CD14-positive monocyte (primary cell): ENCODE measurements at regions of chr2 and their contacts with region 1.

Region 1: DNA sequence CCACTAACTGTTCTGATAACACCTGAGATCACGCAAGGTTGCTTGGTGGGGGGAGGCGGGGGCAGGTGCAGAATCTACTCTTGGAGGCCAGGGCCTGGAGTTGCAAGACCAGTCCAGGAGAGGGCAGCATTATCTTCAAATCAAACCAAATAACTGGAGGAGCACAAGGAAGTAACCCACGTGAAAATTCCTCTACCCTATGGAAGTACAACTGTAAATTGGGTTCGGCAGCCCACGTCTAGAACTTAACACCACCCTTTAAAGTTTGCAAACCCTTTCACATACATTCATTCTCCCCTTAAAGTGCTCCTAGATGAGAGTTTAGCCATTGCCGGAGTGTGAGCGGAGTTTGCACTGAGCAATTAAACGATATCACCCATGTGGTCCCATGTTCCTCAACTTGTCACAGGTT is 19.6 kb upstream of the CXCR1 start:
- DNase-seq: peak; percentile 61 to 77 (median 75)
- H3K4me3 ChIP-seq: no peak overlapping the region
- H3K4me3 Mint-ChIP-seq: peak overlapping the region in 1 of 2 donors; percentile 26
- H3K27ac ChIP-seq: no peak overlapping the region
- H3K27ac Mint-ChIP-seq: peak overlapping the region in 2 of 7 donors; percentile 5 to 50
- H3K4me1 ChIP-seq: peaks cover 6 to 10% of the 10 kb centered on the region in 2 donors
- H3K4me1 Mint-ChIP-seq: peaks cover 6% of the 10 kb centered on the region
- H3K27me3 ChIP-seq: no peaks in the 10 kb centered on the region
- H3K27me3 Mint-ChIP-seq: peaks cover 0 to 5% (median 3%) of the 10 kb centered on the region in 3 donors
- CTCF ChIP-seq: peak; percentile 89

Region 2: GRCh38 chr2:218230882-218231281 is 44.5 kb after region 1 on chr2:
- intact Hi-C with region 1: loop called in 1 of 2 experiments (anchors 5 kb)
- DNase-seq: peak; percentile 36 to 45 (median 38)
- H3K4me3 ChIP-seq: peak overlapping the region in 1 of 3 experiments; percentile 64
- H3K4me3 Mint-ChIP-seq: no peak overlapping the region
- H3K27ac ChIP-seq: peak overlapping the region; percentile 68 to 76
- H3K27ac Mint-ChIP-seq: peak overlapping the region; percentile 18 to 88 (median 85)
- H3K4me1 ChIP-seq: peaks cover 44 to 52% of the 10 kb centered on the region in 2 donors
- H3K4me1 Mint-ChIP-seq: peaks cover 47% of the 10 kb centered on the region
- H3K27me3 ChIP-seq: no peaks in the 10 kb centered on the region
- H3K27me3 Mint-ChIP-seq: no peaks in the 10 kb centered on the region
- CTCF ChIP-seq: peak; percentile 56

Region 3: DNA sequence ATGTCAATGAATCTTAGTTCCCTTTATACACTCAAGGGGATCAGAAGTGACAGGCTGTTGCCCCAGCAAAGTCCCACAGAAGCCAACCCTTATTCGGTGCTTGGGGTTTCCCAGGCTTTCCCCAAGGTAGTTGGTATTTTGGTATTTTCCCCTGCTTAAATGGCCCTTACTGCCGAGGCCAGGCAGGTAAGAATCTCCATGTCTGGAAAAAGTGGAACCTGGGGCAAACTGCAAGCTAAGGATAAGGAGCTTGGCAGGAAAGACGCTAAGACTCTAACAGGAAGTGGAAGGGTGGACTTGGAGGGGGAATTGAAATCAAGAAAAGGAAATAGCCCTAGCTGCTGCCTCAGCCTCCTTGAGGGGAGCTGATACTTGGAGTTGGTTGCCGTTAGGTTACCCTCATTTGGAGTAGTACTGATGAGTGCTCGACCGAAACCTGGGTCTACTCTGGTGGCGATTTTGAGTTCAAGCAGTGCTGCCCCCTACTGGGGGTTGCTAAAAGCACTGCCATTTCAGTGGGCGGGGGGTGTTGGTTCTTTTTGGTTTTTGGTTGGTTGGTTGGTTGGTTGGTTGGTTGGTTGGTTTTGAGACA is 71.1 kb after region 1 on chr2:
- intact Hi-C with region 1: loop called in 1 of 2 experiments (anchors 5 kb)
- DNase-seq: peak; percentile 82 to 94 (median 92)
- H3K4me3 ChIP-seq: peak overlapping the region in 1 of 3 experiments; percentile 53
- H3K4me3 Mint-ChIP-seq: peak overlapping the region; percentile 32 to 76
- H3K27ac ChIP-seq: peak overlapping the region; percentile 64 to 93
- H3K27ac Mint-ChIP-seq: peak overlapping the region; percentile 84 to 97 (median 92)
- H3K4me1 ChIP-seq: peaks cover 72 to 85% of the 10 kb centered on the region in 2 donors
- H3K4me1 Mint-ChIP-seq: peaks cover 88% of the 10 kb centered on the region
- H3K27me3 ChIP-seq: no peaks in the 10 kb centered on the region
- H3K27me3 Mint-ChIP-seq: no peaks in the 10 kb centered on the region
- CTCF ChIP-seq: peak; percentile 22

Region 4: GRCh38 chr2:218471982-218472381 is 285.6 kb after region 1 on chr2:
- intact Hi-C with region 1: loop called in 1 of 2 experiments (anchors 10 kb)
- DNase-seq: peak; percentile 79 to 86 (median 85)
- H3K4me3 ChIP-seq: peak overlapping the region in 1 of 3 experiments; percentile 43
- H3K4me3 Mint-ChIP-seq: peak overlapping the region in 1 of 2 donors; percentile 46
- H3K27ac ChIP-seq: peak overlapping the region in 1 of 2 donors; percentile 63
- H3K27ac Mint-ChIP-seq: peak overlapping the region; percentile 54 to 87 (median 84)
- H3K4me1 ChIP-seq: peaks cover 30 to 31% of the 10 kb centered on the region in 2 donors
- H3K4me1 Mint-ChIP-seq: peaks cover 33% of the 10 kb centered on the region
- H3K27me3 ChIP-seq: no peaks in the 10 kb centered on the region
- H3K27me3 Mint-ChIP-seq: peaks cover 0 to 3% (median 0%) of the 10 kb centered on the region in 3 donors
- CTCF ChIP-seq: no peak